ENCODE measurements at regions of chr12 and their contacts with region 1.

Region 1: DNA sequence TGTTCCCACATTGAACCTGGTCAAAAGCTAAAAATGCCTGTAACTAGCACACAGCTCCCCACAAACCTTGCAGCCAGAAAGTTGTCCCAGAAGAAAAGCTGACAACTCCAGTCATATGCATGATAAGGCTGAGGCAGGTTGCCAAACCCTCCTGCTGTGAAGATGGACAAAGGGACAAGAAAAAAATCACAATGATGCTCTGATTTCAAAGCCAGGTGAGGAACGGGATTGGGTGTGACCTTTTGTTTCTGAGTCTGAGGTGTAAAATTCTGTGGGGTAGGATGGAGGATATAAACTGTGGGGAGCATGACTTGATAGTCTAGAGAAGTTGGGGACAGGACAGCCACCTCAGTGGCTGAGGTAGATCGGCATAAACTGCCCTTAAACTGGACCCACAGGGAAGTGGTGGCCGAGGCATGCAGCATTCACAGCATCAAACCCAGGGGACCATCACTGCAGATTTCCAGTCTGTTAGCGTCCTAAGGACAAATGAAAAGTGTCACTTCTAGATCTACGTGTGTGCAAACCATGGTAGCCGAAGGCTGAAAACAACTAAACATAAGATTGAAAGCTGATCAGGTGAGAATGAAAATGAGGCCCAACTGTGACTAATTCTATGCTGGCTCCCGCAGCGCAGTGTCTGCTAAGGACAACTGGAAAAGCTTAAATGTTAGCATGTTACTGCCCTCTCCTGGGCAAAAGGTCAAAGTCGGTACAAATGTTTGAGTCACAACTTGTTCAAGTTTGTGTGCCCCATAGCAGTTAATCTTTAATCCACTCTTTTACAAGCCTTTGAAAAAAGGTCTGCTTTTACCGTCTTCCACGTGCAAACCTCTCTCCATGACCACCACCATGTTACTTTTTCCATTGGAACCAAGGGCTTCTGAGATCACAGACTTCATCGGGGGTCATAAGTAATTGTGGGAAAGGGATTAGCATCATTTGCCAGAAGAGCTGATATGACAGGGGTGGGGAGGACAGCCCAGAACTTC is 39.8 kb downstream of the GRIN2B start:
- DNase-seq: no peak
- ATAC-seq: peak; percentile 92
- H3K4me3 ChIP-seq: no peak overlapping the region
- H3K27ac ChIP-seq: no peak overlapping the region
- H3K4me1 ChIP-seq: no peaks in the 10 kb centered on the region
- H3K27me3 ChIP-seq: peaks cover 0 to 3% of the 10 kb centered on the region in 2 experiments; a peak in 1 of 4 replicates
- CTCF ChIP-seq: peak; percentile 28 to 72 (median 53); a peak in 5 of 6 replicates
- EP300 ChIP-seq: no peak
- POLR2A ChIP-seq: no peak
- RAD21 ChIP-seq: peak; percentile 63

Region 2: GRCh38 chr12:13734584-13735152 is 206.9 kb before region 1 on chr12:
- CTCF ChIA-PET with region 1: no interaction called
- POLR2A ChIA-PET with region 1: no interaction called
- RAD21 ChIA-PET with region 1: no interaction called
- SMC1A ChIA-PET with region 1: no interaction called
- in situ Hi-C with region 1: no loop called
- intact Hi-C with region 1: loop called (anchors 5 kb)
- DNase-seq: no peak
- ATAC-seq: no peak
- H3K4me3 ChIP-seq: no peak overlapping the region
- H3K27ac ChIP-seq: no peak overlapping the region
- H3K4me1 ChIP-seq: no peaks in the 10 kb centered on the region
- H3K27me3 ChIP-seq: no peaks in the 10 kb centered on the region
- CTCF ChIP-seq: no peak
- EP300 ChIP-seq: no peak
- POLR2A ChIP-seq: no peak
- RAD21 ChIP-seq: no peak

Region 3: DNA sequence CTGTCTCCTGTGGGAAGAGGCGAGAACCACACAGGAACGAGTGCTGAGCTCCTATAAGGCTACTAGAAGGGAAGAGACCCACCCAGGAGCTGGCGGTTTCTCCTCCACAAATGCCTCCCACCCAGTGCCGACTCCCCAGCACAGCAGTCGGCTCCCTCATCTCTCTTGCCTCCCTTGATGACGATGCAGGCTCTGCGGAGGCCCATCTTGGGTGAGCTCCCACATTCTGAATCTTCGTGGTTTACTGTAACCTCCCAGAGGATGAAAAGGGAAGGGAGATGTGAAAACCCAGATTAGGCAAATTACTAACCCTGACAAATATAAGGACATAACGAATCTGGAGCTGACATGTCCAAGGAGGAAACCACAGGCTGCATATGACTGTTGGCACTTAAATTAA is 16.0 kb after region 1 on chr12:
- CTCF ChIA-PET with region 1: no interaction called
- POLR2A ChIA-PET with region 1: no interaction called
- RAD21 ChIA-PET with region 1: no interaction called
- SMC1A ChIA-PET with region 1: no interaction called
- in situ Hi-C with region 1: no loop called
- intact Hi-C with region 1: no loop called
- DNase-seq: no peak
- ATAC-seq: no peak
- H3K4me3 ChIP-seq: no peak overlapping the region
- H3K27ac ChIP-seq: no peak overlapping the region
- H3K4me1 ChIP-seq: no peaks in the 10 kb centered on the region
- H3K27me3 ChIP-seq: no peaks in the 10 kb centered on the region; a peak in 1 of 4 replicates
- CTCF ChIP-seq: no peak
- EP300 ChIP-seq: no peak
- POLR2A ChIP-seq: no peak
- RAD21 ChIP-seq: no peak

Region 4: DNA sequence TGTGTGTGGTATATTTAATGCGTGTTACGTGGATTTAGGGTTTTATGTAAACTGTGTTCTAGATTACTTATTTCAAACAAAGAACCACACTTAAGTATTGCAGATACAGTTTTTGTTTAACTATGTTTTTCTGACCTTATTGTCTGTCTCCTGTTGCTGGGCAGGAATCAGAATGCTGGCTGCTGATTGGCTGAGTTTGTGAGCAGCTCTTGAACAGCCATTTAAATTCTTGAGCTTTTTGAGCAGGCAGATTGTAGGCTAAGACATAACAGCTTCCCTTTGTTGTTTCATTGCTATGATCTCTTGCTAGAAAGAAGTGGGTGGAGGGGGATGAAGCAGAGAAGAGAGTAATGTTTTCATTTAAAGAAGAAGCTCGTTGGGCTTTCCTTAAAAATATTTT is 476.2 kb after region 1 on chr12:
- CTCF ChIA-PET with region 1: no interaction called
- POLR2A ChIA-PET with region 1: no interaction called
- RAD21 ChIA-PET with region 1: no interaction called
- SMC1A ChIA-PET with region 1: no interaction called
- in situ Hi-C with region 1: no loop called
- intact Hi-C with region 1: no loop called
- DNase-seq: no peak
- ATAC-seq: peak; percentile 74
- H3K4me3 ChIP-seq: no peak overlapping the region
- H3K27ac ChIP-seq: no peak overlapping the region
- H3K4me1 ChIP-seq: no peaks in the 10 kb centered on the region
- H3K27me3 ChIP-seq: no peaks in the 10 kb centered on the region
- CTCF ChIP-seq: no peak
- EP300 ChIP-seq: no peak
- POLR2A ChIP-seq: no peak
- RAD21 ChIP-seq: no peak

Measured in GM12878 (cell line).